Posterior vena cava (tissue), 2 donors: ENCODE measurements at regions of chr10 and their contacts with region 1.

Region 1: DNA sequence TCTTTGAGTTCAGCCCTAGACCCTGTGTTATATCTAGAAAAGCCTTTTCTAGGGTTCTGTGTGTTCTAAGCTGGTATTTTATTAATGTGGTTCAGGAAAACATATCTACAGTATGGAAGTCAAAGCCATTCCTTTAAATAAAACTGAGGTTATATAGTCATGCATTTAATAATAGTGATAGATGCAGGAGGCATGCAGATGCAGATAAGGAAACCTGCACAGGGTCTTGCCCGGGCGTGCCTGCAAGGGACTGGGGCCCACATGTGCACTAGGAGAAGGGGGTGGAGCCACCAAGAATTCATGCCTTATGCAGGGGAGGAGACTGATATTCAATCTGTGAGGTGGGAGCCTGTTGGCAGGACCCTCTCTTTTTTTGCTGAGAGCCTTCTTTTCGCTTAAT is 171.5 kb downstream of the PRPF18 start:
- DNase-seq: no peak

Region 2: GRCh38 chr10:12068449-12069269 is 1689.7 kb before region 1 on chr10 and contains the start of gene DHTKD1:
- intact Hi-C with region 1: loop called in 1 of 2 experiments (anchors 10 kb)
- DNase-seq: peak; percentile 99
- total RNA-seq, gene DHTKD1: 11.0 to 12.5 TPM

Region 3: GRCh38 chr10:13690281-13690825 is 68.0 kb before region 1 on chr10:
- intact Hi-C with region 1: loop called in 1 of 2 experiments (anchors 5 kb)
- DNase-seq: peak; percentile 32

Region 4: GRCh38 chr10:14751014-14751896 is 992.9 kb after region 1 on chr10:
- intact Hi-C with region 1: no loop called
- DNase-seq: peak; percentile 86